Heart right ventricle (tissue), 16 donors: ENCODE measurements at regions of chr12 and their contacts with region 1.

Region 1: DNA sequence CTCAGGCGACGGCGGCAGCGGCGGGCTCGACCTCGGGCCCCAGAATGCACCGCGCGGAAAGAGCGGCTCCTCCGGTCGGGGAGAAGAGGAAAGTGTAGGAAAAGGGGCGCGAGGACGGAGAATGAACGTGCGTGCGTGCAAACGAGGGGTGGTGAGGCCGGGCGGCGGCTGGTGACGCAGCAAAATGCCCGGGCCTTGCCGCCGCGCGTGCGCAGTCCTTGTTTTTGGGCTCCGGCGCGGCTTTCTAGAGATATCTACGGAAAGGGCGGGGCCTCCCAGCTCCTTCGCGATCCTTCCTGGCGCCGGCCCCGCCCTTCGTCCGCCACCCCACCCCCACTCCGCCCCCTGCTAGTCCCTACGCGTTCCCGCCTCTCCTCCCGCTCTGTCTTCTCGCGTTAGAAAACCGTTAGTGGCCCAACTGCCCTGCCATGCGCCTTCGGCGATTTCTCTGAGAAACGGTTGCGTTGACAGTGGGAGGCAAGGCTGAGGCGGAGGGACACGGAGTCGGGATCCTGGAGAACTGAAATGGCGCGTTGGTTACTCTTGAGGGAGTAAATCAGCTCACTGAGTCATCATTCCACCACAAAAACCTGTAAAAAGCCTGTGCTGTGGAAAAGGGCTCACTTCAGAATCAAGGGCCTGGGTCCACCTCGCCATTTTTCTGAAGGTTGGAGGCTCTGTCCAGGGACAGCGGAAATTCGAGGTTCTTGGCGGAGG is at the start of gene PTGES3:
- DNase-seq: peak; percentile 98
- ATAC-seq: peak; percentile 94 to 97 (median 96)
- H3K4me3 ChIP-seq: peak within 1 kb of the TSS; percentile 78 to 99 (median 90)
- H3K27ac ChIP-seq: peak within 1 kb of the TSS; percentile 93 to 100 (median 98)
- H3K4me1 ChIP-seq: peaks cover 5 to 47% (median 43%) of the 10 kb centered on the region in 9 donors
- H3K27me3 ChIP-seq: no peaks in the 10 kb centered on the region
- CTCF ChIP-seq: peak in 1 of 9 donors; percentile 10
- total RNA-seq, gene PTGES3: 100.0 to 139 (median 110) TPM

Region 2: GRCh38 chr12:56645717-56646446 is 42.4 kb before region 1 on chr12 and contains the start of gene ATP5F1B:
- intact Hi-C with region 1: loop called in 6 of 10 experiments (anchors 2 to 5 kb)
- DNase-seq: peak; percentile 91 to 99
- ATAC-seq: peak; percentile 97 to 99 (median 98)
- H3K4me3 ChIP-seq: peak within 1 kb of the TSS; percentile 72 to 96 (median 87)
- H3K27ac ChIP-seq: peak within 1 kb of the TSS; percentile 88 to 98 (median 95)
- H3K4me1 ChIP-seq: peaks cover 0 to 51% (median 44%) of the 10 kb centered on the region in 9 donors
- H3K27me3 ChIP-seq: no peaks in the 10 kb centered on the region
- CTCF ChIP-seq: peak in 1 of 9 donors; percentile 12
- total RNA-seq, gene ATP5F1B: 2,092 to 3,612 (median 3,330) TPM